ENCODE measurements at regions of chr1 and their contacts with region 1.

Region 1: GRCh38 chr1:40802078-40802741 is 18.6 kb downstream of the KCNQ4 start:
- DNase-seq: peak; percentile 79 to 93
- ATAC-seq: peak; percentile 96 to 98 (median 96)
- H3K4me3 ChIP-seq: peak overlapping the region; percentile 44
- H3K4me3 Mint-ChIP-seq: peak overlapping the region; percentile 75
- H3K27ac ChIP-seq: peak overlapping the region; percentile 55
- H3K27ac Mint-ChIP-seq: peak overlapping the region; percentile 23 to 85
- H3K4me1 ChIP-seq: peaks cover 20% of the 10 kb centered on the region
- H3K4me1 Mint-ChIP-seq: peaks cover 12 to 21% of the 10 kb centered on the region in 2 donors
- H3K27me3 ChIP-seq: no peaks in the 10 kb centered on the region
- H3K27me3 Mint-ChIP-seq: peaks cover 0 to 2% of the 10 kb centered on the region in 2 donors
- CTCF ChIP-seq: no peak

Region 2: DNA sequence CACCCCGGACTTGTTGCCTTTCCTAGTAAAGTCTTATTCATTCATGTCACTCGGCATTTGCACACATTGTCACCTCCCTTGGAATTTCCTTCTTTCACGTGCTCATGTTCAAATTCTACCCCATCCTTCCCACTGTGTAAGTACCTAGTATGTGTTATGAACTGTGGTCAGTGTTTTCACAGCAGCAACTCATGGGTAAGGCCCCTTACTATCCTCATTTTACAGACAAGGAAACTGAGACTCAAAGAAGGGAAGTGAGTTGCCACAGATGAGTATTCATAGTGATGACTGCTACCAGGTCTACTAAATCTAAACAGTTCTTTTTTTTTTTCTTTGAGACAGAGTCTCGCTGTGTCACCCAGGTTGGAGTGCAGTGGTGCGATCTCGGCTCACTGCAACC is 49.4 kb after region 1 on chr1:
- intact Hi-C with region 1: no loop called
- DNase-seq: no peak
- ATAC-seq: no peak
- H3K4me3 ChIP-seq: no peak overlapping the region
- H3K4me3 Mint-ChIP-seq: no peak overlapping the region
- H3K27ac ChIP-seq: no peak overlapping the region
- H3K27ac Mint-ChIP-seq: no peak overlapping the region
- H3K4me1 ChIP-seq: peaks cover 6% of the 10 kb centered on the region
- H3K4me1 Mint-ChIP-seq: peaks cover 6 to 8% of the 10 kb centered on the region in 2 donors
- H3K27me3 ChIP-seq: no peaks in the 10 kb centered on the region
- H3K27me3 Mint-ChIP-seq: peaks cover 0 to 7% of the 10 kb centered on the region in 2 donors
- CTCF ChIP-seq: no peak

Region 3: DNA sequence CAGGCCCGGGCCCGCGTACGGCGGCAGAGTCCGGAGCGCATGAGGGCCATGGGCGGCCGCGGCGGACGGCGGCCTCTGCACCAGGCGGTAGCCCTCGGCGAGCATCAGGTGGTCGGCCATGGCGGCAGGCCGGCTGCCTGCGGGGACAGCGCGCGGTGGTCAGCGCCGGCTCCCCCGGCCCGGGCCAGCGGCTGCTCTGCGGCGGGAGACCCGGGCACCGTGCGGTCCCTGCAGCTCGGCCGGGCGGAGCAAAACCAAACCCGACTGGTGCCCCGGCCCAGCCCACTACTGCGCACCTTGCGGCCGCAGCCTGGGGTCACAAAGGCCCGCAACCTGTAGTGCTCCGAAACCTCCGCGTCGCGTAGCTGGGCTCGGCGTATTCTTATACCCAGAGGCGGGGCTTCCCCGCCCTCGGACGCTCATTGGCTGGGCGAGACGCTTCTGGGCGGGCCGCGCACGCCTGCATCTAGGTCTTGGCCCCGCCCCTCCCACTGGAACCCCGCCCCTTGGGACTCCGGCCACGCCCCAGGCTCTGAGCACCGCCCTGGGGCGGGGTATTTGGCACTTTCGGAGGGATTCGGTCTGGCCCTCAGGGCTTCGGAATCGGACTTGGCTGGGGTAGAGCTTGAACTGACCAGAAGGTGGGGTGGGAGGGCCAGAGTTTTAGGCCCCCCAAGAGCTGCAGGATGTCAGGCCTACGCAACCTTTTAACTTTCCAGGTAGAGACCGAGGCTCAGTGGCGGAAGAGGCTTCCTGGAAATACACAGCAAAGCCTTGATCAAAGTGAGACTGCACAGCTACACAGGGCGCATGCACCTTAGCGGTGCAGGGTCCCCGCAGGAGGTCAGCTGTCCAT is 60.0 kb after region 1 on chr1 and contains the start of gene CITED4:
- intact Hi-C with region 1: loop called (anchors 1 kb)
- DNase-seq: peak; percentile 95 to 97
- ATAC-seq: peak; percentile 97 to 99 (median 98)
- H3K4me3 ChIP-seq: peak within 1 kb of the TSS; percentile 55
- H3K4me3 Mint-ChIP-seq: peak within 1 kb of the TSS; percentile 89
- H3K27ac ChIP-seq: peak within 1 kb of the TSS; percentile 62
- H3K27ac Mint-ChIP-seq: peak within 1 kb of the TSS; percentile 72 to 89
- H3K4me1 ChIP-seq: peaks cover 15% of the 10 kb centered on the region
- H3K4me1 Mint-ChIP-seq: peaks cover 7 to 14% of the 10 kb centered on the region in 2 donors
- H3K27me3 ChIP-seq: no peaks in the 10 kb centered on the region
- H3K27me3 Mint-ChIP-seq: peaks cover 23 to 24% of the 10 kb centered on the region in 2 donors
- CTCF ChIP-seq: no peak
- total RNA-seq, gene CITED4: 3.5 to 7.7 (median 4.9) TPM

Measured in natural killer cell (primary cell).